Mammary epithelial cell (primary cell): ENCODE measurements at regions of chr2 and their contacts with region 1.

Region 1: GRCh38 chr2:179129574-179130238 is 79.8 kb upstream of the CCDC141 start:
- DNase-seq: no peak
- H3K4me3 ChIP-seq: no peak overlapping the region
- H3K27ac ChIP-seq: no peak overlapping the region
- H3K4me1 ChIP-seq: no peaks in the 10 kb centered on the region
- H3K27me3 ChIP-seq: no peaks in the 10 kb centered on the region
- CTCF ChIP-seq: peak; percentile 49 to 64

Region 2: GRCh38 chr2:178761759-178762371 is 367.8 kb before region 1 on chr2:
- CTCF ChIA-PET with region 1: no interaction called
- dilution Hi-C with region 1: no loop called
- in situ Hi-C with region 1: no loop called
- intact Hi-C with region 1: loop called (anchors 1 kb)
- DNase-seq: peak; percentile 37
- H3K4me3 ChIP-seq: no peak overlapping the region
- H3K27ac ChIP-seq: no peak overlapping the region
- H3K4me1 ChIP-seq: peaks cover 19% of the 10 kb centered on the region
- H3K27me3 ChIP-seq: no peaks in the 10 kb centered on the region
- CTCF ChIP-seq: peak; percentile 78 to 83

Region 3: DNA sequence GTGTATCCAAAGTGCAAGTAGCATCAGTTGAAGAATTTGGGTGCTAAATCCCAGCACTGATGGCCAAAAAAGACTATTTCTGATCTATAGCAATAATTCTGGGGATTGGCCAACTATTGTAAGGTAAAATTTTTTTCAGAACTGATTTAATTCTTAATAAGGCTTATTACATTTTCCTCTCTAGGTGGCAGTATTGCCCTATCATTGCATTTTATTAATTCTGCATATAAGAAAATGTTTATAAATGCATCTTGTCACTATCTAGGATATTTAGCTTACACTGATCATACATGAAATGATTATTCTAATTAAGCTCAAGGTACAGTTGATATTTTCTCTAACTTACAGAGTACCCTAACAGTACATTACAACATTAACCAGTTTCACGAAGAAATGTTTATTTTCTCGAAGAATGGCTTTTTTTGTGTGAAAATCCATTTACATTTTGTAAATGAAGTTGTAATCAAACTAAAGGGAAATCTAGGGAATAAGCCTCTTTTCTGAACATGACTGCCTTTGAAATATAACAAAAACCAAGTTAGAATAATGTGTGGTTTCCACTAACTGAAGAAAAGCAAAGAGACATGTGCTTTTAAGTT is 333.5 kb before region 1 on chr2:
- CTCF ChIA-PET with region 1: no interaction called
- dilution Hi-C with region 1: no loop called
- in situ Hi-C with region 1: loop called in 1 of 2 experiments (anchors 25 kb)
- intact Hi-C with region 1: loop called (anchors 1 kb)
- DNase-seq: peak; percentile 10
- H3K4me3 ChIP-seq: no peak overlapping the region
- H3K27ac ChIP-seq: no peak overlapping the region
- H3K4me1 ChIP-seq: no peaks in the 10 kb centered on the region
- H3K27me3 ChIP-seq: no peaks in the 10 kb centered on the region
- CTCF ChIP-seq: peak; percentile 40 to 57

Region 4: GRCh38 chr2:178891265-178891958 is 238.3 kb before region 1 on chr2:
- CTCF ChIA-PET with region 1: interaction called, 6 read pairs
- dilution Hi-C with region 1: no loop called
- in situ Hi-C with region 1: no loop called
- intact Hi-C with region 1: loop called (anchors 2 kb)
- DNase-seq: peak; percentile 52
- H3K4me3 ChIP-seq: no peak overlapping the region
- H3K27ac ChIP-seq: no peak overlapping the region
- H3K4me1 ChIP-seq: no peaks in the 10 kb centered on the region
- H3K27me3 ChIP-seq: no peaks in the 10 kb centered on the region
- CTCF ChIP-seq: peak; percentile 90 to 96

Region 5: DNA sequence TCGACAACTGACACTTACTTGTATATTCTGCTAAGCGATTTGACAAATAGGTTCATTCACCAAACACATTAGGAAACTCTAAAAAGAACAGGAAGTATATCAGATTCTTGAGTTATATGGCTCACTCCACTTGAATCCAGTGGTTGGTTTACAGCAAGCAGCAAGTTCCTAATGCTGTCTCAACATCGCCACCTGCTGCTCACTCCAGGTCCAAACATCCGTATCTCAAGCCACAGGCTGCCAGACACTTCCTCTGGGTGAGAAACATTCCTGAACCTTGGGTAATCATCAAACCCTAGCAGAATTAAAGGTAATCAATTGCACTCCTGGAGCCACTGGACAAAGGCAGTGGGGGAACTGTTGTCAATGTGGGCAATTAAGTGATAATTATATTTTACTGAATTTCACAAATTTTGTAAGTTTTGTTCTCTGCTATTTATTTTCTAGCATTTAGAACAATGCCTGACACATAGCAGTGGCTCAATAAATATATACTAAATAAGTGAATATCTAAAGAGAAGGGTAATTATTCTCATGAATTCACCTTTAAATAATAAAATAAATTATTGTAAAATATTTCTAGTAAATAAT is 215.4 kb before region 1 on chr2:
- CTCF ChIA-PET with region 1: no interaction called
- dilution Hi-C with region 1: no loop called
- in situ Hi-C with region 1: no loop called
- intact Hi-C with region 1: loop called (anchors 5 kb)
- DNase-seq: peak; percentile 75
- H3K4me3 ChIP-seq: no peak overlapping the region
- H3K27ac ChIP-seq: no peak overlapping the region
- H3K4me1 ChIP-seq: peaks cover 11% of the 10 kb centered on the region
- H3K27me3 ChIP-seq: no peaks in the 10 kb centered on the region
- CTCF ChIP-seq: peak; percentile 87 to 92

Region 6: GRCh38 chr2:179044500-179044899 is 85.2 kb before region 1 on chr2:
- CTCF ChIA-PET with region 1: no interaction called
- dilution Hi-C with region 1: no loop called
- in situ Hi-C with region 1: no loop called
- intact Hi-C with region 1: no loop called
- DNase-seq: no peak
- H3K4me3 ChIP-seq: no peak overlapping the region
- H3K27ac ChIP-seq: no peak overlapping the region
- H3K4me1 ChIP-seq: no peaks in the 10 kb centered on the region
- H3K27me3 ChIP-seq: peaks cover 2% of the 10 kb centered on the region
- CTCF ChIP-seq: no peak

Region 7: GRCh38 chr2:179201869-179202268 is 72.2 kb after region 1 on chr2:
- CTCF ChIA-PET with region 1: no interaction called
- dilution Hi-C with region 1: no loop called
- in situ Hi-C with region 1: no loop called
- intact Hi-C with region 1: no loop called
- DNase-seq: peak; percentile 10
- H3K4me3 ChIP-seq: no peak overlapping the region
- H3K27ac ChIP-seq: no peak overlapping the region
- H3K4me1 ChIP-seq: no peaks in the 10 kb centered on the region
- H3K27me3 ChIP-seq: no peaks in the 10 kb centered on the region
- CTCF ChIP-seq: no peak